SK-N-SH (cell line): ENCODE measurements at regions of chr19 and their contacts with region 1.

Region 1: GRCh38 chr19:13093407-13094105 is 9.1 kb downstream of the LYL1 start:
- DNase-seq: peak; percentile 92
- H3K4me3 ChIP-seq: no peak overlapping the region; a peak in 1 of 4 replicates
- H3K27ac ChIP-seq: peak overlapping the region; percentile 27 to 99; a peak in 3 of 4 replicates
- H3K4me1 ChIP-seq: peaks cover 19 to 76% of the 10 kb centered on the region in 2 experiments
- H3K27me3 ChIP-seq: no peaks in the 10 kb centered on the region
- CTCF ChIP-seq: peak; percentile 88
- EP300 ChIP-seq: no peak
- RAD21 ChIP-seq: peak; percentile 98

Region 2: DNA sequence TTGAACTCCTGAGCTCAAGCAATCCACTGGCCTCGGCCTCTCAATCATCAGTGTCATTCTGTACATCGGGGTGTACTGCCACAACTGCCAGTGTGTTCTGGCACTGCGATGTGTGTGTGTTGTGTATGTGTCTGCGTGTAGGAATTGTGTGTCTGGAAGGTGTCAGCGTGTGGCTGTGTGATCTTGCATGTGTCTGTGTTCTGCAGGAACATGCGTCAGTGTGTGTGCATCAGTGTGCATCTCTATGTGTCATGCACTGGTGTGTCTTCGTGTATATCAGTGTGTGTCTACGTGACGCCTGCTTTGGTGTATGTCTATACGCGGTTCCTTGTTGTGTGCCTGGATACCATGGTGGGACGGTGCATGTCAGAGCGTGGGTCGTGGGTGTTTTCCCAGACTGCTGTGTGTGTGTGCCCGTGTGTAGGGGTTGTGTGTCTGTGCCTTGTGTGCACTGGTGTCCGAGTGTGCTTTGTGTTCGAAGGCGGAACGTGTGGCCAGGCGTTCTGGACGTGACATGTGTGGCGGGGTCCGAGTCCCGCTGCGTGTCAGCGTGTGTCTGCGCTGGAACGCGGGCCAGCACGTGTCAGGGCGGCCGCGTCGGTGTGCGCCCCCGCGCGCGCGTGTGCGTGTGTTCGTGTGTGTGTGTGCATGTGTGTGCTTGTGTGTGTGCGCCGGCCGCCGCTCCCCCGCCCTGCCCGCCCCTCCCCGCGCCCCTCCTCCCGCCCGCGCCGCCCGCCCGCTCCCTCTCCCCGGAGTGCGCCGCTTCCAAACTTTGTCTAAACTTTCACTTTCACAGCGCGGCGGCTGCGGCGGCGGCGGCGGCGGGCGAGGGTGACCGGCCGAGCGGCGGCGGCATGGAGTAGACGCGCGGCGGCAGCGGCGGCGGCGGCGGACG is 98.6 kb before region 1 on chr19 and contains the start of gene NFIX:
- CTCF ChIA-PET with region 1: interaction called, 12 read pairs
- POLR2A ChIA-PET with region 1: no interaction called
- DNase-seq: peak; percentile 86
- H3K4me3 ChIP-seq: peak within 1 kb of the TSS; percentile 57 to 77
- H3K27ac ChIP-seq: no peak within 1 kb of the TSS; a peak in 1 of 4 replicates
- H3K4me1 ChIP-seq: peaks cover 0 to 17% of the 10 kb centered on the region in 2 experiments; a peak in 1 of 4 replicates
- H3K27me3 ChIP-seq: no peaks in the 10 kb centered on the region
- CTCF ChIP-seq: no peak
- EP300 ChIP-seq: no peak
- RAD21 ChIP-seq: no peak
- polyA plus RNA-seq, gene NFIX: 5.1 and 14.8 TPM in 2 replicates

Region 3: GRCh38 chr19:13012690-13013608 is 80.6 kb before region 1 on chr19:
- CTCF ChIA-PET with region 1: interaction called, 26 read pairs
- POLR2A ChIA-PET with region 1: no interaction called
- DNase-seq: no peak
- H3K4me3 ChIP-seq: no peak overlapping the region
- H3K27ac ChIP-seq: no peak overlapping the region
- H3K4me1 ChIP-seq: peaks cover 4 to 28% of the 10 kb centered on the region in 2 experiments; a peak in 3 of 4 replicates
- H3K27me3 ChIP-seq: no peaks in the 10 kb centered on the region
- CTCF ChIP-seq: no peak
- EP300 ChIP-seq: no peak
- RAD21 ChIP-seq: no peak

Region 4: DNA sequence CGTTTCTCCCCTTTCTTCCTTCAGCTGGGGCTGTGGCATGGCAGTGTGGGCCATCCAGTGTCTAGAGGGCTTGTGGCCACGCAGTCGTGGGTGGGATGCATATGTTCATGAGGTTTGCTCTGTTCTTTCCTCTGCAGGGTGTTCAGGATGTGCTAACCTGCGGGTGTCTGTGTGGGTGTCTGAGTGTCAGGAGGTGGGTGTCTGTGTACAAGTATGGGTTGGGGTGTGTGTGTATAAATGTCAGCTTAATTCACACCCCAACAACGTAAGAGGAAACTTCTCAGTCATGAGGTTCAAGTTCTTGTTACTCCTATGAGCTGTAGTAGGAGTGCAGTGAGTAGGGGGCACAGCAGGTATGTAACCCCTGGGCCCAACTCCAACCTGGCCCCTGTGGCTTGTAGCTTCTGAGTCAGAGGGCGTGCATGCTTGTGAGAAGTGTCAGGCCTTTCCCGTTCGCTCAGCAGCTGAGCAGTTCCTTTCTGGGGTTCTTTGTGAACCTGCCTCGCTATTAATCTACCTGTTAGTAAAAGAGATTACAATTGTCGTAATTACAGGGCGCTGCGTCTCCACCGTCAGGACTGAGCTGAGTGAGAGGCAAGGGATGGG is 49.2 kb before region 1 on chr19:
- CTCF ChIA-PET with region 1: interaction called, 10 read pairs
- POLR2A ChIA-PET with region 1: no interaction called
- DNase-seq: no peak
- H3K4me3 ChIP-seq: no peak overlapping the region
- H3K27ac ChIP-seq: no peak overlapping the region
- H3K4me1 ChIP-seq: peaks cover 9 to 24% of the 10 kb centered on the region in 2 experiments; a peak in 2 of 4 replicates
- H3K27me3 ChIP-seq: no peaks in the 10 kb centered on the region
- CTCF ChIP-seq: no peak
- EP300 ChIP-seq: no peak
- RAD21 ChIP-seq: no peak

Region 5: DNA sequence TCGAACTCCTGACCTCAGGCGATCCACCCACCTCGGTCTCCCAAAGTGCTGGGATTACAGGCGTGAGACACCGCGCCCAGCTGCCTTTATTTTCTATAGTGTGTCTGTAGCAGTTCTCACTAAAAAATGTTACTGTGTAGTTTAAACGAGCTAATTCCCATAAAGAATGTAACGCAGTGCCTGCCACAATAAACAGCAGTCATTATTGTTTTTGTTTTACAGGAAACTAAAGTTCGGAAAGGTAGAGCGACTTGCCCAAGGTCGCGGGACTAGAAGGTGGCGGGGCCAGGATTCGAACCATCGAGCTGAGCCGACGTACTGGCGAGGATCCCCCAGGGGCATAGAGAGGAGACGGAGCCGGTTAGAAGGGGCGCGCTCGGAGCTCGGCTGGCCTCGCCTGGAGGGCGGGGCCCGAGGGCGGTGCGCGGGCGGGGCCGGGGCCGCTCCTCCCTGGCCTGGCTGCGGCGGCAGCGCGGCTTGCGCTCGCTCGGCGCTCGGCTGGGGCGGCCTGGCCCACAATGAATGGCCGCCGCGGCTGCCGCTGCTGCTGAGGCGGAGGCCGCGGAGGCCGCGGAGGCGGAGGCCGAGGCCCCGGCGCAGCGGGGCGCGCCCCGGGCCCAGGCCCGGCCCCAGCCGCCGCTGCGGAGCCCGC is 24.3 kb after region 1 on chr19 and contains the start of gene NACC1:
- CTCF ChIA-PET with region 1: interaction called, 20 read pairs
- POLR2A ChIA-PET with region 1: no interaction called
- DNase-seq: peak; percentile 99
- H3K4me3 ChIP-seq: peak within 1 kb of the TSS; percentile 97 to 98
- H3K27ac ChIP-seq: peak within 1 kb of the TSS; percentile 65 to 85
- H3K4me1 ChIP-seq: peaks cover 22 to 27% of the 10 kb centered on the region in 2 experiments; a peak in 2 of 4 replicates
- H3K27me3 ChIP-seq: no peaks in the 10 kb centered on the region
- CTCF ChIP-seq: no peak
- EP300 ChIP-seq: no peak
- RAD21 ChIP-seq: no peak
- polyA plus RNA-seq, gene NACC1: 72.8 and 127 TPM in 2 replicates

Region 6: GRCh38 chr19:13181747-13182388 is 88.3 kb after region 1 on chr19:
- CTCF ChIA-PET with region 1: no interaction called
- POLR2A ChIA-PET with region 1: no interaction called
- DNase-seq: peak; percentile 60
- H3K4me3 ChIP-seq: no peak overlapping the region
- H3K27ac ChIP-seq: peak overlapping the region; percentile 17 to 40; a peak in 3 of 4 replicates
- H3K4me1 ChIP-seq: peaks cover 8% of the 10 kb centered on the region in 2 experiments; a peak in 2 of 4 replicates
- H3K27me3 ChIP-seq: no peaks in the 10 kb centered on the region
- CTCF ChIP-seq: no peak
- EP300 ChIP-seq: no peak
- RAD21 ChIP-seq: peak; percentile 25; the same call in 1 of the 2 replicates